GM12878 (cell line): ENCODE measurements at regions of chr5 and their contacts with region 1.

Region 1: DNA sequence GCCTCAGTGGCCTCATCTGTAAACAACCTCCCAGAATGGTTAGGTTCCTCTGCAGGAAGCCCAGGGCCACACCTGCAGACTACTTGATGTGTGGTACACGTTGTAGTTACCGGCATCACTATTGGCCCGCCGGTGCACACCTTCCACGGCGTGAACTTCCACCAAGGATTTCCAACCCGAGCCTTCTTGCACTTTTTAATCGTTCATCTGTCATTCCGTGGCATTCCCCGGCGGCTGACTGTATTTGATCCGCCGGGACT is 5.3 kb upstream of the TRIM41 start:
- DNase-seq: no peak
- ATAC-seq: peak; percentile 20
- H3K4me3 ChIP-seq: peak overlapping the region; percentile 70
- H3K27ac ChIP-seq: no peak overlapping the region
- H3K4me1 ChIP-seq: peaks cover 8% of the 10 kb centered on the region
- H3K27me3 ChIP-seq: no peaks in the 10 kb centered on the region
- CTCF ChIP-seq: no peak
- EP300 ChIP-seq: no peak
- POLR2A ChIP-seq: no peak
- RAD21 ChIP-seq: no peak

Region 2: DNA sequence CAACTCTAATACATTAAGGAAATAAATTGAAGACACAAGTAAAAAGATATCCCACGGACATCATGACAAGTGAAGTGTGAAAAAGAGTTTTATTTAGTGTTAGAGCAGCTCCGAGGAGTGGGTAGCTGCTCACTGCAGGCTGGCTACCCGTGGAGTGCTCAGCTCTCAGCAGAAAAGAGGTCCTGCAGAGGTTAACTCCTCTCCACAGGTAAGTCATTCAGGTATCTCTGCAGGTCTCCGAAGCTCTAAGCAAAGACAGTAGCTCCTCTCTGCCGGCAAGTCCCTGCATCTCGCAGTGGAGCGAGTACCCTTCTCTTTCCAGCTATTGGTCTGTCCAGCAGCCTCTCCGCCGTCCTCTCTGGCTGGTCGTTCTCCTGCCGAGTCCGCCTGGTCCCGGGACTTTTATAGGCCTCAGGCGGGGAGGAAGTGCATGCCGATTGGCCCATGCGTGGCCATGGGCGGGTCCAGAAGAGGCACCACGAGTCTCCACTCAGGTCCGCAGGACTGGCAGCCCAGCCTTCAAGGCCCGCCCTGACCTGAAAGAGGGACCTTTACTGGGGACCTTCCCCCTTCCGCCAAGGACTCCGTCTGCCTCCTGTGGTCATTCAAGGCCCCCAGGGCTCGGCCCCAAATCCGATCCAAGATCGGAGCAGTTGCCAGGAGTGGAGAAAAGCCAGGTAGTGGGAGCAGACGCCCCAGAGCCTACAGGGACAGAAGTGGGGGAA is 147.8 kb before region 1 on chr5:
- CTCF ChIA-PET with region 1: no interaction called
- POLR2A ChIA-PET with region 1: no interaction called
- RAD21 ChIA-PET with region 1: no interaction called
- SMC1A ChIA-PET with region 1: no interaction called
- in situ Hi-C with region 1: no loop called
- intact Hi-C with region 1: no loop called
- DNase-seq: no peak
- ATAC-seq: peak; percentile 33; the same call in 1 of the 3 replicates
- H3K4me3 ChIP-seq: no peak overlapping the region
- H3K27ac ChIP-seq: no peak overlapping the region
- H3K4me1 ChIP-seq: no peaks in the 10 kb centered on the region
- H3K27me3 ChIP-seq: peaks cover 0 to 2% of the 10 kb centered on the region in 2 experiments; a peak in 1 of 4 replicates
- CTCF ChIP-seq: no peak
- EP300 ChIP-seq: no peak
- POLR2A ChIP-seq: no peak
- RAD21 ChIP-seq: no peak

Region 3: DNA sequence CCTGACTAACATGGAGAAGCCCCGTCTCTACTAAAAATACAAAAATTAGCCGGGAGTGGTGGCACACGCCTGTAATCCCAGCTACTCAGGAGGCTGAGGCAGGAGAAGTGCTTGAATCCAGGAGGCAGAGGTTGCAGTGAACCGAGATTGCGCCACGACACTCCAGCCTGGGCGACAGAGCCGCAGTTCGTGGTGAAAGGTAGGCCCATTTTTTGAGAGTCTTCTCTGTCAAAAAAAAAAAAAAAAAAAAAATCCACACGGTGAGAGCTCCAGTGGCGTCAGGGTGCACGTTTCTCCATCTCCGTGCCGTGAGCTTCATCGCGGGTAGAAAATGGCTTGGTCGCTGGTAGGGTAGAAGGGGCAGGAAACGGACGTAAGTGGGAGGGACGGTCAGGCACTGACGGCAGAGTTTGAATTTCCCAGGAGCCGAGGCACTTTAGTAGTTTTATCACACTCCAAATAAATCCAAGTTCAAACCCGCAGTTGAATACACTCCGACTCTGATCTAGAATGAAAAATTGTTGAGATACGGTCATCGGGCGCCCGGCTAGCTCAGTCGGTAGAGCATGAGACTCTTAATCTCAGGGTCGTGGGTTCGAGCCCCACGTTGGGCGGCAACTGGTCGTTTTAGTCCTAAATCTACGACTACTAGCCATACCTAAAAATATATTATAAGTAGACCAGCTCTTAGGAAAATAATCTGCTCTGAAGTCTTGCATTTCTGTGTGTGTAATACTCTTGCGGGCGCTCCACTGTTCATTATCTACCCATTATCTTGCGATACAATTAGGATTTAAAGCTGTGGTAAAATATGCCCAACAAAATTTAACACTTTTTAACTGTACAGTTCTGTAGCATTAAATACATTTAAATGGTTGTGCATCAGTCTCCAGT is 10.3 kb before region 1 on chr5:
- CTCF ChIA-PET with region 1: interaction called, 6 read pairs
- POLR2A ChIA-PET with region 1: interaction called, 15 read pairs
- RAD21 ChIA-PET with region 1: interaction called, 16 read pairs
- SMC1A ChIA-PET with region 1: interaction called, 9 read pairs
- in situ Hi-C with region 1: no loop called
- intact Hi-C with region 1: loop called (anchors 1 kb)
- DNase-seq: no peak
- ATAC-seq: peak; percentile 59
- H3K4me3 ChIP-seq: peak overlapping the region; percentile 83
- H3K27ac ChIP-seq: peak overlapping the region; percentile 51
- H3K4me1 ChIP-seq: peaks cover 14% of the 10 kb centered on the region
- H3K27me3 ChIP-seq: peaks cover 4 to 8% of the 10 kb centered on the region in 2 experiments; a peak in 3 of 4 replicates
- CTCF ChIP-seq: no peak
- EP300 ChIP-seq: no peak
- POLR2A ChIP-seq: no peak
- RAD21 ChIP-seq: no peak